ENCODE measurements at regions of chr2 and their contacts with region 1.

Region 1: DNA sequence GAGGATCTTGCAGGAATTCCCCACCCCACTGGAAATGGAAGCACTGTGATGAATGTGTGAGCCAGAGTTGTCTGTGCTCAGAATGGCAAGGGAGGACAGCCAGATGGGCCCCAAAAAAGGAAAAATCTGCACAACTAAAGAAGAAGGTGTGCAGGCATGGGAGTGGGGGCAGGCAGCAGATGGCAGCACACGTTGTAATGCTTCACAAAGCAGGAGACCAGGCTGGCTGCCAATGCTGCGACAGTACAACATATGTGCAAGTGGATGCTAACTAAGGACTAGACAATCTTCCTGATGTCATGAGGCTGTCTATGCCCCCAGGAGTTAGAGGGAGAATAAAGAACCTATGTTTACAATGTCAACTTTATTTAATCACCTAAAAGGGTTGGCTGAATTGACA is 27.2 kb downstream of the ST6GAL2 start:
- DNase-seq: no peak
- H3K4me3 Mint-ChIP-seq: no peak overlapping the region
- H3K27ac Mint-ChIP-seq: no peak overlapping the region
- H3K4me1 Mint-ChIP-seq: no peaks in the 10 kb centered on the region
- H3K27me3 Mint-ChIP-seq: no peaks in the 10 kb centered on the region
- CTCF ChIP-seq: no peak

Region 2: DNA sequence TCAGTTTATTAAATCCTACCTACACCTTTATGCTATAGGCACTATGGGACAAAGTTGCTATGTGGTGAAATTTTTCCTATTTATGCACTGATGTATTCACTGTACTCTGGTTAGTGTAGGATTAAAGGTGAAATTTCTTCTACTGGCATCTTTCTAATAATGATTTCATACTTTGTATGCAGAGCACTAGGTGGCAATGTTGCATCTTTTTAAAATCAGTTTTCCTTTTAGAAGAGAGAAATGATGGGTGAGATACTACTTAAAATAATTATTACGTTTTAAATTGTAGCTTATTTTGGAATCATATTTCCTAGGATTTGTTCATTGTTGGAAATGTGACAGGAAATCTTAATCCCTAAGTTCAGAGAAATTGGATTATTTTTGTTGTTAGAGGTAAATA is 220.8 kb before region 1 on chr2:
- CTCF ChIA-PET with region 1: no interaction called
- intact Hi-C with region 1: loop called (anchors 5 kb)
- DNase-seq: no peak
- H3K4me3 Mint-ChIP-seq: no peak overlapping the region
- H3K27ac Mint-ChIP-seq: no peak overlapping the region
- H3K4me1 Mint-ChIP-seq: no peaks in the 10 kb centered on the region
- H3K27me3 Mint-ChIP-seq: peaks cover 11% of the 10 kb centered on the region
- CTCF ChIP-seq: peak; percentile 13

Region 3: GRCh38 chr2:107025869-107026380 is 167.1 kb after region 1 on chr2:
- CTCF ChIA-PET with region 1: no interaction called
- intact Hi-C with region 1: no loop called
- DNase-seq: no peak
- H3K4me3 Mint-ChIP-seq: no peak overlapping the region
- H3K27ac Mint-ChIP-seq: no peak overlapping the region
- H3K4me1 Mint-ChIP-seq: no peaks in the 10 kb centered on the region
- H3K27me3 Mint-ChIP-seq: no peaks in the 10 kb centered on the region
- CTCF ChIP-seq: no peak

Region 4: DNA sequence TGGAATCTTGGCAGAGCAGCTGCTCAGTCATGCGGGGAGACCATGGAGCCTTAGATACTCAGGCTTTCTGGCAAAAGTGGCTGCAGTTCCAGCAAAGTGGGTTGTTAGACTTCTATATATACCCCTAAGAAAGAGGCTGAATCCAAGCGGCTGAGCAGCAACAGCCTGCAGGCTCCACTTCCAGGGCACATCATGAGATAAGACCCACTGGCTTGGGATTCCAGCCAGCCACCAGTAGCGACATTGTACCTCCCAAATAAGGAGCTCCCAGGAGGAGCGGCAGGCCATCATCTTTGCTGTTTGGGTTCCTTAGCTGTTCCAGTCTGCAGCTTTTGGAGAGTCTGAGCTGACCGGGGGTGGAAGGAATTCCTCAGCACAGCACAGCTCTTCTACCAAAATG is 177.5 kb after region 1 on chr2:
- CTCF ChIA-PET with region 1: no interaction called
- intact Hi-C with region 1: no loop called
- DNase-seq: no peak
- H3K4me3 Mint-ChIP-seq: no peak overlapping the region
- H3K27ac Mint-ChIP-seq: no peak overlapping the region
- H3K4me1 Mint-ChIP-seq: no peaks in the 10 kb centered on the region
- H3K27me3 Mint-ChIP-seq: no peaks in the 10 kb centered on the region
- CTCF ChIP-seq: no peak

Region 5: DNA sequence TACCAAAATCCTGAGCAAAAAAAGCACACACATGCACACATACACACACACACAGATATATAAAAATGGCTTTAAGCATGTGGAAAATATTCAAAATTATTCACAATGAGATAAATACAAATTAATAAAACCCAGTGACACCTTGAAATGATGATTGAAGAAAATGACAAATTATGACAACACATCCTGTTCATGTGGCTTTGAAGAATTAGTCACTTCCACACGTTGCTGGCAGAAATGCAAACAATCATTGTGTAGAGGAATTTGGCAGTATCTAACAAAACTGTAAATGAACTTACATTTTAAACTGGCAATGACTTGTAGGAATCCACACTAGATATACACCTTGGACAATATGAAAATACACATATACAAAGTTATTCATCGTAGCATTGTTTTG is 872.1 kb after region 1 on chr2:
- CTCF ChIA-PET with region 1: no interaction called
- intact Hi-C with region 1: no loop called
- DNase-seq: no peak
- H3K4me3 Mint-ChIP-seq: no peak overlapping the region
- H3K27ac Mint-ChIP-seq: no peak overlapping the region
- H3K4me1 Mint-ChIP-seq: no peaks in the 10 kb centered on the region
- H3K27me3 Mint-ChIP-seq: no peaks in the 10 kb centered on the region
- CTCF ChIP-seq: no peak

Measured in Calu3 (cell line).